Breast epithelium (tissue), 4 donors: ENCODE measurements at regions of chr6 and their contacts with region 1.

Region 1: GRCh38 chr6:159899994-159900745 is 9.4 kb downstream of the MAS1 start:
- DNase-seq: no peak
- H3K4me3 ChIP-seq: no peak overlapping the region
- H3K27ac ChIP-seq: no peak overlapping the region
- H3K4me1 ChIP-seq: no peaks in the 10 kb centered on the region
- H3K27me3 ChIP-seq: no peaks in the 10 kb centered on the region
- CTCF ChIP-seq: no peak
- POLR2A ChIP-seq: no peak

Region 2: GRCh38 chr6:159529934-159530333 is 370.2 kb before region 1 on chr6:
- intact Hi-C with region 1: loop called (anchors 10 kb)
- DNase-seq: no peak
- H3K4me3 ChIP-seq: no peak overlapping the region
- H3K27ac ChIP-seq: no peak overlapping the region
- H3K4me1 ChIP-seq: no peaks in the 10 kb centered on the region
- H3K27me3 ChIP-seq: no peaks in the 10 kb centered on the region
- CTCF ChIP-seq: no peak
- POLR2A ChIP-seq: no peak

Region 3: GRCh38 chr6:159829526-159829925 is 70.6 kb before region 1 on chr6:
- intact Hi-C with region 1: no loop called
- DNase-seq: no peak
- H3K4me3 ChIP-seq: no peak overlapping the region
- H3K27ac ChIP-seq: no peak overlapping the region
- H3K4me1 ChIP-seq: no peaks in the 10 kb centered on the region
- H3K27me3 ChIP-seq: peaks cover 0 to 2% of the 10 kb centered on the region in 2 donors
- CTCF ChIP-seq: no peak
- POLR2A ChIP-seq: no peak